ENCODE measurements at regions of chr9 and their contacts with region 1.

Region 1: DNA sequence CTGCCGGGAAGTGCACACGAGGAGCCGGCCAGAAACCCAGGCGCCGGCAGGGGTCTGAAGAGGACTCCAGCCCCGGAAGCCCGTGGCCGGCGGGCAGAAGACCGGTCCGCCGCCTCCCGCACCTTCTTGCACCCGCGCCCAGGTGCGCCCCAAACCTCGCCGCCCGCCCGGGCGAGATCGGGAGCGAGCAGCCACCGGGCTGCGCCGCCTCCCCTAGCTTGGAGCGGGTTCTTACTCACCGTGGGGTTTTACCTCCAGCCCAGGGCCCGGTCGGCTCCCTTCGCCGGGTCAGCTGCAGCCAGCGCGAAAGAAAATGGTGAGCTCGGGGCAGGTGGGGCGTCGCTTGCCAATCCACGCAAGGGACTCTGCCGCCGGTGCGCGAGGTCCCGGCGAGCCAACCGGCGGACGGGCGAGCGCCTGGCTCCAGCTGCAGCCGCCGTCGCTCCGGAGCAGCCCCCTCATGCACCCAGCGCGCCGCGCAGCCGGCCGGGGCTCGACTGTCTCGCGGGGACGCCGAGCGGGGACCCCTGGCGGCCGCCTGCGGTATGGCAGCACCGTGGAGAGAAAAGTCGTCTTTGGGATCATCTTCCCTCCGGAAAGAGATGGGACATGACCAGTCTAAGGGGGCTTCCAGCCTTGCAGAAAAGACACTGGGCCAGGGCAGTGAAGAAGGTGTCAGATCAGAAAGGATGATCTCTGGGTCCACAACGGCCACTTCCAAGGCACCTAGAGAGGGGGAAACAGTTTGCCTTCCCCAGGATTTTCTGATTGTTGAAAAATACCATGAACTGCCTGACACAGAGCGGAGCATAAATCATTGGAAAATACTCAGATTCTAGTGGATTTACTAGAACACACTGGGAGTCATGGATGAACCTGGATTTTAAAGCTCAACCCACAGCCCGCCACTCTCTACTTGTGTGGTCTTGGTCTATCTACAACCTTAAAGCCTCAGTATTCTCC is at the start of gene MOB3B:
- DNase-seq: peak in 1 of 2 experiments; percentile 97
- H3K4me3 ChIP-seq: peak within 1 kb of the TSS; percentile 79 to 95 (median 86)
- H3K27ac ChIP-seq: peak within 1 kb of the TSS; percentile 67; the same call in 1 of the 2 replicates
- H3K4me1 ChIP-seq: peaks cover 2 to 11% (median 6%) of the 10 kb centered on the region in 4 experiments; a peak in 5 of 7 replicates
- H3K27me3 ChIP-seq: peaks cover 0 to 3% (median under 1%) of the 10 kb centered on the region in 4 experiments; a peak in 2 of 7 replicates
- CTCF ChIP-seq: peak; percentile 84 to 90 (median 85)
- EP300 ChIP-seq: no peak
- POLR2A ChIP-seq: 0 out of 3 replicates have a peak, but pooled peaks of 1 of the 2 experiments have one; percentile 11
- RAD21 ChIP-seq: peak; percentile 83 to 85
- total RNA-seq, gene MOB3B: 14.9 and 16.1 TPM in 2 replicates

Region 2: GRCh38 chr9:27333241-27334052 is 196.2 kb before region 1 on chr9:
- CTCF ChIA-PET with region 1: interaction called, 36 read pairs
- POLR2A ChIA-PET with region 1: interaction called, 5 read pairs
- DNase-seq: peak; percentile 82 to 84
- H3K4me3 ChIP-seq: peak overlapping the region in 1 of 4 experiments; percentile 20; a peak in 1 of 8 replicates
- H3K27ac ChIP-seq: no peak overlapping the region
- H3K4me1 ChIP-seq: peaks cover 0 to 9% (median 5%) of the 10 kb centered on the region in 4 experiments; a peak in 5 of 7 replicates
- H3K27me3 ChIP-seq: no peaks in the 10 kb centered on the region
- CTCF ChIP-seq: peak in 2 of 3 experiments; percentile 71 to 77; a peak in 3 of 4 replicates
- EP300 ChIP-seq: no peak
- POLR2A ChIP-seq: no peak
- RAD21 ChIP-seq: peak; percentile 88 to 94

Region 3: DNA sequence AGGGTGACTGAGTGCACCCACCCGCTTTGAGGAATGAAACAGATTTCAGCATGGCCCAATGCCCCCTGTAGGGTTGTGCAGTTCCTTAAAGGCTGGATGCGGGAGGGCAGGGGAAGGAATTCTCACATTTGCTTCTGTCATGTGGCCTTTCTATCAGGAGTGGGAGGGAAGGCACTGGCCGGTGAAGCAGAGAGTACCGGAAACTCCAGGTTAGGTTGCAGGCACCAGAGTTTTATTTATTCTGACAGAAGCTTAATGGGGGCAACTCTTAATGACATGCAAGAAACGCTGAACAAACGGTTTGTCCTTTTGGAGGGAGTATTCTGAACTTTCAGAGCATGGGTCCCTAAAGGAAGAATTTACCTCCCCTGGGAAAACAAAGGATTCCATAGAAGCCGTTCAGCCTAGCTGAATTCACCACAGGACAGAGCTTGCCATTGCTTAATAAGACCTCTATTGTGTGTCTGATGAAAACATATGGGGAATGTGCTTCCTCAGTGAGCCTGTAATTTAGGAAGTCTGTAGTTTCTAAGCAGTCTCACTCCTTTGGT is 188.6 kb before region 1 on chr9:
- CTCF ChIA-PET with region 1: interaction called, 13 read pairs
- POLR2A ChIA-PET with region 1: no interaction called
- DNase-seq: no peak
- H3K4me3 ChIP-seq: no peak overlapping the region; a peak in 1 of 8 replicates
- H3K27ac ChIP-seq: no peak overlapping the region
- H3K4me1 ChIP-seq: peaks cover 2 to 16% (median 12%) of the 10 kb centered on the region in 4 experiments; a peak in 6 of 7 replicates
- H3K27me3 ChIP-seq: no peaks in the 10 kb centered on the region
- CTCF ChIP-seq: no peak
- EP300 ChIP-seq: no peak
- POLR2A ChIP-seq: no peak
- RAD21 ChIP-seq: no peak

Region 4: GRCh38 chr9:27365707-27366376 is 163.8 kb before region 1 on chr9:
- CTCF ChIA-PET with region 1: interaction called, 10 read pairs
- POLR2A ChIA-PET with region 1: no interaction called
- DNase-seq: no peak
- H3K4me3 ChIP-seq: no peak overlapping the region
- H3K27ac ChIP-seq: no peak overlapping the region
- H3K4me1 ChIP-seq: peaks cover 14 to 42% (median 23%) of the 10 kb centered on the region in 4 experiments
- H3K27me3 ChIP-seq: no peaks in the 10 kb centered on the region
- CTCF ChIP-seq: no peak
- EP300 ChIP-seq: no peak
- POLR2A ChIP-seq: no peak
- RAD21 ChIP-seq: no peak

Region 5: GRCh38 chr9:27414220-27414761 is 115.3 kb before region 1 on chr9:
- CTCF ChIA-PET with region 1: interaction called, 10 read pairs
- POLR2A ChIA-PET with region 1: no interaction called
- DNase-seq: no peak
- H3K4me3 ChIP-seq: no peak overlapping the region
- H3K27ac ChIP-seq: no peak overlapping the region
- H3K4me1 ChIP-seq: no peaks in the 10 kb centered on the region
- H3K27me3 ChIP-seq: no peaks in the 10 kb centered on the region
- CTCF ChIP-seq: no peak
- EP300 ChIP-seq: no peak
- POLR2A ChIP-seq: no peak
- RAD21 ChIP-seq: no peak

Region 6: DNA sequence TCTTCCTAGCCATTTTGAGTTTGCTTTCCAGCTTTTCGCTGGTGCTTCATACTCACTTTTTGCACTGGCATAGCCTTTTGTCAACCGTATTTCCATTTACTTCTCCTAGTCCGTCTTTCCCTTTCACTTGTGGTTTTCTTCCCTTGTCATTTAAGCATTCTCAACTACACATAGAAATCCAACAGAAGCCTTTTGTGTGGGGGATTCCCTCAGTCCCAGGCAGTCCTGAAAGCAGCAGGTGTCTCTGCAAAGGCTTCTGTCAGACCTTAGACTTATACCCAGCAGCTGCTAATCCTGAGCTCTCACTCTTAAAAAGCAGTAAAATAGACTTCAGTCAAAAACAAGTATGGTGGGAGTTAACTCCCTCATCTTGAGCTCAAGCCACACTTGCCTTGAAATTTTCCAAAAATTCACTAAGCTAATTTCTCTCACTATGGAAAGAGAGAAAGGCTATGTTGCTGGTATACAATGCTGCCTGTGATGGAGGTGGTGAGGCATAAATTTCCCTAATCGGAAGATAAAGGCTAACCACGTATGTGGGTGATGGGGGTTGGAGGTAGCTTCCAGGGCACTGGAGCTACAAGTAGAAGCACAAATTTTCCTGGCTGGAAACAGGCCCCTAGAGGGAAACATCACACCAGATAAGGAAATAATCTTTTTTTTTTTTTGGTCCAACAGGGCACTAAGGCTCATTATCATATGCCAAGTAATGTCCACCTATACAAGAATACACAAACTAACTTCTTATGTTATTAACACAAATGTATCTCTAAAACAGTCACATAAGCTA is 40.3 kb before region 1 on chr9:
- CTCF ChIA-PET with region 1: interaction called, 32 read pairs
- POLR2A ChIA-PET with region 1: interaction called, 3 read pairs
- DNase-seq: no peak
- H3K4me3 ChIP-seq: peak overlapping the region in 2 of 4 experiments; percentile 2 to 28; a peak in 2 of 8 replicates
- H3K27ac ChIP-seq: peak overlapping the region; percentile 50; the same call in 1 of the 2 replicates
- H3K4me1 ChIP-seq: peaks cover 11 to 27% (median 18%) of the 10 kb centered on the region in 4 experiments; a peak in 6 of 7 replicates
- H3K27me3 ChIP-seq: no peaks in the 10 kb centered on the region
- CTCF ChIP-seq: peak in 1 of 3 experiments; percentile 3; a peak in 2 of 4 replicates
- EP300 ChIP-seq: no peak
- POLR2A ChIP-seq: no peak
- RAD21 ChIP-seq: peak; percentile 30 to 32; a peak in 2 of 4 replicates

Region 7: DNA sequence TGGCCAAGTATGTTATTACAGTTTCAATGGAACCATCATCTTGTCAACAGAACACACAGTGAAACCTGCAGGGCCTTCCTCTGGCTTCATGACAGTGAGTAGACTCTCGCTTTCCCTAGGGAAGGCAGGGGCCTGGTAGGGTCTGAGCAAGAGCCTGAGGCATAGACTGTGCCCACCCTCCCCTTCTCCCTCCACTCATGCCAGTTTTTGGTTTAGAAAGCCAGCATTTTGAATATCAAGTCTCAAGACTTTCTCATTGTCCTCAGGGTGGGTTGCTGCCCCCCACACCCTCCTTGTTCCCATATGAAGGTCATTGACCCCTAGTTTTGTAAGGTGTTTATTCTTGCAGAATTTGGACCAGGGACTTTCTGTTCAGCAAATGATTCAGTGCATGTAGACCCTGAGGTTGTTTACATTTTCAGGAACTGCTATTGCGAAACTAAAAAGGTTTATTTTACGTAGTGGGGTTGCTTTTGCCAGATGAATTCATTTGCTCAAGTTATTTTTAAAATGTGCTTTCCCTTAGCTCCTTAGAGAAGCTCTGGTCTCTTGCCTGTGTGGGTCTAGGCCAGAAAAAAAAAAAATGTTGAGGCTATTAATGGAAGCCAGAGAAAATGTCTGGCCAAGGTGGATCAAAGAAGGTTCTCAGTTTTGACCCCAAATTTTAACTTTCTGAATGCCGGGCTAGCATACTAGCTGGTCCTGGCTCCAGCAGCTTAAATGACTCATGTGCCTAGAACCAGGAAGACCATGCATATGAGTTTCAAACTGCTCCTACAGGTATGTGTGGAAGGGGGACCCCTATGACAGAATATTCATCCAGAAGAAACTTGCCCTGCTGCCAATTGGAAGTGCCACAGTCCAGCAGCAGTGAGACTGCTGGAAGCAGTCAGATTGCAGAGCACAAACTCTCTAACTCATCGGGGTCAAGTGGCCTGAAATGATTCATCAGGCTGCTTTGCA is 10.2 kb after region 1 on chr9:
- CTCF ChIA-PET with region 1: interaction called, 21 read pairs
- POLR2A ChIA-PET with region 1: interaction called, 4 read pairs
- DNase-seq: no peak
- H3K4me3 ChIP-seq: no peak overlapping the region
- H3K27ac ChIP-seq: no peak overlapping the region
- H3K4me1 ChIP-seq: peaks cover 0 to 5% (median 0%) of the 10 kb centered on the region in 4 experiments; a peak in 2 of 7 replicates
- H3K27me3 ChIP-seq: no peaks in the 10 kb centered on the region
- CTCF ChIP-seq: no peak
- EP300 ChIP-seq: no peak
- POLR2A ChIP-seq: no peak
- RAD21 ChIP-seq: no peak

Region 8: DNA sequence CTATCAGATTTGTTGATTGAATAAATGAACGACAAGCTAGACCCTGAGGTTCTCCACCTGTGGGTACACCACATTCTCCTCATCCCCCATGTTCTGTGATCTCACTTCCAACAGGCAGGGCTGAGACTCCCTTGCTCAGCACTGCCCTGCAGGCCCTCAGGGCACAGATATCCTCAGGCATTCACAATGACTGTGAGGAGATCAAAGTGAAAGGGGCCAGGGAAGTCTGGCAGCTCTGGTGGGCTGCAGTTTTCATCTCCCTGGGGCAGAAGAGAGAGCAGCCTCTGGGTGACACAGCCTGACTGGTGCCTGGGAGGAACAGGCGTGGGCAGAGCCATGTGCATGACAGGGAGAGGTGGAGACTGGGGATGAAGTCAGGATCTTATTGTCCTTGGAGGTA is 186.1 kb after region 1 on chr9:
- CTCF ChIA-PET with region 1: no interaction called
- POLR2A ChIA-PET with region 1: no interaction called
- DNase-seq: no peak
- H3K4me3 ChIP-seq: no peak overlapping the region
- H3K27ac ChIP-seq: no peak overlapping the region
- H3K4me1 ChIP-seq: no peaks in the 10 kb centered on the region
- H3K27me3 ChIP-seq: no peaks in the 10 kb centered on the region
- CTCF ChIP-seq: no peak
- EP300 ChIP-seq: no peak
- POLR2A ChIP-seq: no peak
- RAD21 ChIP-seq: no peak